PC-9 (cell line): ENCODE measurements at regions of chr10 and their contacts with region 1.

Region 1: DNA sequence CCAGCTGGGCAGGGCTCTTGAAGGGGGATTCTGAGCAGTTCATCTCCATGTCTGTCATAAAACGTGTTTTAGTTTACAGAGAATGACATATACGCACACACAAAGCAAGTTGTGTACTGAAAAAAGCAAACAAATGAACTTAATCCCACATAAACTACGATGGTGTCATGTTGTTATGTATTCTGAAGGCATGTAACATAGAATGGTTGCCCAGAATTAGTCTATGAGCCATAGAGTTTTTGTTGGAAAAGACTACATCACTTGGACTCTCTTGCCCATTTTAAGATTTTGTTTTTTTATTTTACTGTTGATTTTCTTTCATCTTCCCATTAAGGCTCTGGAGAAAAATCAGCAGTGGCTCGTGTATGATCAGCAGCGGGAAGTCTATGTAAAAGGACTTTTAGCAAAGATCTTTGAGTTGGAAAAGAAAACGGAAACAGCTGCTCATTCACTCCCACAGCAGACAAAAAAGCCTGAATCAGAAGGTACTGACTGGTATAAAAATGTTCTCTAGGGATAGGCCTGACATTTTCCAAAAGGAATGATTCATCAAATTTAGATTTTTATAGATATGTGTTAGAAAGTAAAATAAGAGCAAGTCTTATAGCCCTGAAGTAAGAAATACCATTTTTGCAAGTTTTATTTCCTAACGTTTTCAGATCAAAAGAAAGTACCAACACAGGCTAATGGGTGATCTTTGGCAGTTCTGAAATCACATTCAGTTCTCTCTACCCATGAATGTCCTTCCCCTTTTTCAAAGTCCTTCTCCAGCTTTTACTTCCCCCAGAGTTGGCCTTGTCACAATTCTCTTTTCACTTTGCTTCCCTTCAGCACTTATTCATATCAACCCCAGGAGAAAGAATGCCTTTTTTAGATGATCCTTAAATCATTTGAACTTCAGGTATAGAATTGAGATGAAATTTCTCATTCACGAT is 18.9 kb downstream of the CEP55 start:
- DNase-seq: no peak
- H3K4me3 ChIP-seq: no peak overlapping the region
- H3K27ac ChIP-seq: no peak overlapping the region
- H3K4me1 ChIP-seq: no peaks in the 10 kb centered on the region
- H3K27me3 ChIP-seq: no peaks in the 10 kb centered on the region
- CTCF ChIP-seq: no peak

Region 2: DNA sequence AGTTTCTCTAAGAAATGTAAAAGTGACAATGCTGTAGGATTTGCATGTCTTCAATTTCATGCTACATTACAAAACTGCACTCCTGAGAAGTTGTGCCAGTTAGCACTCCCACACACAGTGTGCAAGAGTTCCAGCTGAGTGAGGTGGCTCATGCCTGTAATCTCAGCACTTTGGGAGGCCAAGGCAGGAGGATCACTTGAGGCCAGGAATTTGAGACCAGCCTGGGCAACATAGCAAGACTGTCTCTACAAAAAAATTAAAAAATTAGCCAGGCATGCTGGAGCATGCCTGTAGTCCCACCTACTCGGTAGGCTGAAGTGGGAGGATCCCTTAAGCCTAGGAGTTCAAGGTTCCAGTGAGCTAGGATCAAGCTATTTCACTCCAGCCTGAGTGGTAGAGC is 142.4 kb after region 1 on chr10:
- CTCF ChIA-PET with region 1: no interaction called
- POLR2A ChIA-PET with region 1: interaction called, 14 read pairs
- intact Hi-C with region 1: no loop called
- DNase-seq: no peak
- H3K4me3 ChIP-seq: no peak overlapping the region
- H3K27ac ChIP-seq: no peak overlapping the region
- H3K4me1 ChIP-seq: peaks cover 11% of the 10 kb centered on the region
- H3K27me3 ChIP-seq: no peaks in the 10 kb centered on the region
- CTCF ChIP-seq: no peak